ENCODE measurements at regions of chr14 and their contacts with region 1.

Region 1: GRCh38 chr14:65361920-65362319 is 50.6 kb upstream of the FUT8 start:
- DNase-seq: no peak
- ATAC-seq: no peak
- H3K4me3 ChIP-seq: no peak overlapping the region
- H3K27ac ChIP-seq: no peak overlapping the region
- H3K4me1 ChIP-seq: peaks cover 24% of the 10 kb centered on the region
- H3K27me3 ChIP-seq: no peaks in the 10 kb centered on the region
- CTCF ChIP-seq: no peak
- EP300 ChIP-seq: no peak
- POLR2A ChIP-seq: no peak
- RAD21 ChIP-seq: no peak

Region 2: DNA sequence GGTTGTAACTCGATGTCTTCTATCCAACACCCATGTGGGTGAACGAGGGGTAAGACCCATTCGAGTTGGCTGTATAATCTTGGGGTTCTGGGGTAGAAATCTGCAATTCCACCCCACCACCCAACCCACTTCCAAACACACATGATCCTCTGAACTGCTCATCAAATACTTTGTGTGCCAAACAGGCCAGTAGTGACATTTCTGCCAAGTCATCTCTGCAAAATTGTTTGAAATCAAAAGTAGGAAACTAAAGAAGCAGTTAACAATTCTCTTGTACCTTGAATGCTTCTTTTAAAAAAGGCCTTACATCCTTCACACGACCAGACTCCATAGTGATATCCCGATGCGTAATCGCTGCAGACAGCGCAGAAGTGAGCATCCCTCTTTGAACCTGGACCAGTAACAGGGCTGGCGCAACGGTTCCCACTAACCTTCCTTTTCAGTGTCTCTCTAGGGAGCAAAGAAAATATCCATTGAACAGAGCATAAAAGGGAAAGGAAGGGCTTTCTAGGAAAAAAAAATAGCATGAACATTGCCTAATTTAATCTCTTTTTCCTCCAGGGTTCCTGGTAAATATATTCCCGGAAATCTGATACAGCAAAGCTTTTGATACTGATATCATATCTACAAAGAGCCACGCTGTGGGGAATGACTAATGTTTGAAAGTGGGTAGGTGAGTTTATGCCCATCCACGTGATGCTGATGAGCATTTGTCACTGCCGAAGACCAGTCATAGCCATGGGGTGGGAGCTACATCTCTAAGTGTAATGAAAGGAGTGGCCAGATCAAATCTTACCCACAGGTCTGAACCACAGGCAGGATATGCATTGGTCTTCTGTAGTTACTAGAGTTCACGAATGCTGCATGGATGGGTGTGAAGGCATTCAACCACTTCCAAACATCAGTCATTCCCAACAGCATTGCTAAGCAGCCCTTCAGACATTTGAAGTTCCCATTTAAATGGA is 1081.9 kb before region 1 on chr14:
- CTCF ChIA-PET with region 1: no interaction called
- POLR2A ChIA-PET with region 1: no interaction called
- RAD21 ChIA-PET with region 1: no interaction called
- SMC1A ChIA-PET with region 1: no interaction called
- in situ Hi-C with region 1: no loop called
- intact Hi-C with region 1: no loop called
- DNase-seq: no peak
- ATAC-seq: no peak
- H3K4me3 ChIP-seq: no peak overlapping the region
- H3K27ac ChIP-seq: no peak overlapping the region
- H3K4me1 ChIP-seq: no peaks in the 10 kb centered on the region
- H3K27me3 ChIP-seq: no peaks in the 10 kb centered on the region
- CTCF ChIP-seq: no peak
- EP300 ChIP-seq: no peak
- POLR2A ChIP-seq: no peak
- RAD21 ChIP-seq: no peak

Region 3: GRCh38 chr14:65373021-65373678 is 11.2 kb after region 1 on chr14:
- CTCF ChIA-PET with region 1: interaction called, 3 read pairs
- POLR2A ChIA-PET with region 1: no interaction called
- RAD21 ChIA-PET with region 1: no interaction called
- SMC1A ChIA-PET with region 1: interaction called, 19 read pairs
- in situ Hi-C with region 1: no loop called
- intact Hi-C with region 1: no loop called
- DNase-seq: no peak
- ATAC-seq: peak; percentile 37; the same call in 2 of the 3 replicates
- H3K4me3 ChIP-seq: no peak overlapping the region
- H3K27ac ChIP-seq: peak overlapping the region; percentile 22; the same call in 1 of the 2 replicates
- H3K4me1 ChIP-seq: peaks cover 13% of the 10 kb centered on the region
- H3K27me3 ChIP-seq: no peaks in the 10 kb centered on the region
- CTCF ChIP-seq: no peak
- EP300 ChIP-seq: no peak
- POLR2A ChIP-seq: no peak
- RAD21 ChIP-seq: no peak